ENCODE measurements at regions of chr12 and their contacts with region 1.

Region 1: GRCh38 chr12:737122-737739 is 15.1 kb upstream of the WNK1 start:
- DNase-seq: no peak
- CTCF ChIP-seq: no peak

Region 2: DNA sequence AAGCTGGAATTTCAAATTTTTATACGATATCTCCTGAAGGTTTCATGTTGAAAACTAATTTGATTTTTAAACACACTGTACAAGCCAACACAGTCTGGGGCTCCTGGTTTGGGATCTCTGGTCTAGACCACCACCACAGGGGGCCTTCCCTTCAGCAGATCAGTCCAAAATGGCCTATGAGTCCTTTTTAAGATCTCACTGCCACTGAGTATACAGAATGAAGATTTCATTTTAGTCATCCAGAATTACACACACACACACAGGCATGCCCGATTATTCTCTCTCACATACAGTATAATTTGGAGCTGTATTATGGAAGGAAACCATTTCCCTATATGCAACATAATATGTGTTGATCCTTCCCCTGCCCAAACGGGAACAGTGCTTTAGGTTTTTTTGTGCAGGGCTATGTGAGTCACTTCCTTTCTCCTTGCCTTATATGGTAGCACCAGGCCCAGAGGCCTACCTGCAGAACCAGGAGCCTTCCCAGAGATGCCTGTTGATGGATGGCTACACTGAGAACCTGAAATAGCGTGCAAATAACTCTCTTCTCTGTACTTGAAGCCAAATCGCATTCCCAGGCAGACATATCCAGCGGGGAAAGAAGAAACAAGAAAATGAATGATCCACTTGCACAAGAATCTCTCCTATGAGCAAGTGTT is 12.9 kb before region 1 on chr12:
- CTCF ChIA-PET with region 1: interaction called, 15 read pairs
- POLR2A ChIA-PET with region 1: no interaction called
- DNase-seq: no peak
- CTCF ChIP-seq: no peak

Region 3: GRCh38 chr12:879641-880040 is 142.4 kb after region 1 on chr12:
- CTCF ChIA-PET with region 1: no interaction called
- POLR2A ChIA-PET with region 1: no interaction called
- DNase-seq: no peak
- CTCF ChIP-seq: no peak

Region 4: GRCh38 chr12:1234073-1234472 is 496.8 kb after region 1 on chr12:
- CTCF ChIA-PET with region 1: no interaction called
- POLR2A ChIA-PET with region 1: no interaction called
- DNase-seq: no peak
- CTCF ChIP-seq: no peak

Measured in GM10248 (cell line).